ENCODE measurements at regions of chr18 and their contacts with region 1.

Region 1: GRCh38 chr18:55781481-55781957 is 193.5 kb upstream of the TCF4 start:
- DNase-seq: peak; percentile 33 to 67
- ATAC-seq: peak; percentile 57 to 80 (median 73)
- H3K4me3 ChIP-seq: no peak overlapping the region
- H3K27ac ChIP-seq: peak overlapping the region; percentile 82
- H3K4me1 ChIP-seq: peaks cover 9% of the 10 kb centered on the region
- H3K27me3 ChIP-seq: no peaks in the 10 kb centered on the region
- CTCF ChIP-seq: peak; percentile 73

Region 2: GRCh38 chr18:55234366-55235093 is 547.0 kb before region 1 on chr18:
- intact Hi-C with region 1: loop called (anchors 5 kb)
- DNase-seq: peak; percentile 73 to 80
- ATAC-seq: peak; percentile 82 to 95 (median 90)
- H3K4me3 ChIP-seq: no peak overlapping the region
- H3K27ac ChIP-seq: peak overlapping the region; percentile 48
- H3K4me1 ChIP-seq: peaks cover 17% of the 10 kb centered on the region
- H3K27me3 ChIP-seq: no peaks in the 10 kb centered on the region
- CTCF ChIP-seq: peak; percentile 84

Region 3: DNA sequence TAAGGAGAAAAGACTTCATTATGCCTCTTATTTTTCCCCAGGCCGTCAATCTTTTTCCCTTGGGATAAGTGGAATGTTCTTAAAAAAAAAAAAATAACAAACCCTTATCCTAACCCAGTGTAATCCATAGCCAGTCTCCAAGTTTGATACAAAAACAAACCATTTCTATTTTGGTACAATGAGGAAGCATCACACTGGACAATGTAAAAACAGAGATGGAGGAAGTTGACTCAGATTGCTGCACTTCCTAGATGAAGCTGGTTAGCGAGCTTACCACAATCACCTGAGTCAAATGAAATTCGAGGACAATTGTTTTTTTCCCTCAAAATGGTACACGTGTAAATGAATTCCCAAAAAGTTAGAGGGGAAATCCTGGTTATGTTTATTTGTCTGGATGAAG is 453.2 kb before region 1 on chr18:
- intact Hi-C with region 1: loop called (anchors 5 kb)
- DNase-seq: no peak
- ATAC-seq: peak; percentile 53 to 65 (median 59)
- H3K4me3 ChIP-seq: no peak overlapping the region
- H3K27ac ChIP-seq: peak overlapping the region; percentile 89
- H3K4me1 ChIP-seq: peaks cover 48% of the 10 kb centered on the region
- H3K27me3 ChIP-seq: no peaks in the 10 kb centered on the region
- CTCF ChIP-seq: no peak

Region 4: GRCh38 chr18:55415258-55415871 is 366.2 kb before region 1 on chr18:
- intact Hi-C with region 1: loop called (anchors 1 to 2 kb)
- DNase-seq: peak; percentile 88 to 92
- ATAC-seq: peak; percentile 86 to 92 (median 90)
- H3K4me3 ChIP-seq: peak overlapping the region; percentile 20
- H3K27ac ChIP-seq: peak overlapping the region; percentile 32
- H3K4me1 ChIP-seq: peaks cover 63% of the 10 kb centered on the region
- H3K27me3 ChIP-seq: no peaks in the 10 kb centered on the region
- CTCF ChIP-seq: peak; percentile 94

Measured in psoas muscle (tissue), 8 donors.